ENCODE measurements at regions of chr11 and their contacts with region 1.

Region 1: GRCh38 chr11:20387241-20388095 is at the start of gene PRMT3:
- DNase-seq: peak; percentile 98
- ATAC-seq: peak; percentile 97
- H3K4me3 ChIP-seq: peak within 1 kb of the TSS; percentile 77
- H3K27ac ChIP-seq: peak within 1 kb of the TSS; percentile 90
- H3K4me1 ChIP-seq: peaks cover 10% of the 10 kb centered on the region
- H3K27me3 ChIP-seq: no peaks in the 10 kb centered on the region
- CTCF ChIP-seq: peak; percentile 84
- total RNA-seq, gene PRMT3: 6.3 to 23.2 (median 17.2) TPM

Region 2: DNA sequence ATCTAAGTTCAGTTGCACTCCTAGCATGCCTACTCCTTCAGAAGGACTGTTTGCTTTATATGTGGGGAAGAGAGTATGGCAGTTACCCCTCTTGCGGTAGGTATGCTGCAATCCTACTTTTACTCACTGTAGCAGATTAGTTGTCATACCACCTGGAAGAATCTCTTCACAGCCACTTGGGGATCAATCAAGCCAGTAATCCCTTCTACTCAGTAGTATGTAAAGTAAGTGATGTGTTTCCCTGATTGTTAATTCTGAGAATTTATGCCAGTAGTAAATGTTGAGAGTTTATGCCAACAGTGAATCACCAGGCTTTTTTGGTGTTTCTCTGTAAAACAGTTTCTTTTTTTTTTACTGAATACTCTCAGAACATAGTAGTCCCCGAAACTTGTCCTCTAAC is 34.5 kb after region 1 on chr11:
- intact Hi-C with region 1: no loop called
- DNase-seq: no peak
- ATAC-seq: no peak
- H3K4me3 ChIP-seq: no peak overlapping the region
- H3K27ac ChIP-seq: no peak overlapping the region
- H3K4me1 ChIP-seq: no peaks in the 10 kb centered on the region
- H3K27me3 ChIP-seq: no peaks in the 10 kb centered on the region
- CTCF ChIP-seq: no peak

Region 3: GRCh38 chr11:20609727-20610707 is 222.5 kb after region 1 on chr11:
- intact Hi-C with region 1: loop called (anchors 2 to 10 kb)
- DNase-seq: peak; percentile 67 to 73
- ATAC-seq: peak; percentile 89 to 95 (median 92)
- H3K4me3 ChIP-seq: no peak overlapping the region
- H3K27ac ChIP-seq: no peak overlapping the region
- H3K4me1 ChIP-seq: no peaks in the 10 kb centered on the region
- H3K27me3 ChIP-seq: peaks cover 0 to 66% (median 13%) of the 10 kb centered on the region in 3 donors
- CTCF ChIP-seq: peak; percentile 92

Measured in psoas muscle (tissue), 8 donors.